Psoas muscle (tissue), 8 donors: ENCODE measurements at regions of chr7 and their contacts with region 1.

Region 1: GRCh38 chr7:139382439-139382838 is 22.7 kb downstream of the LUC7L2 start:
- DNase-seq: no peak
- ATAC-seq: peak in 1 of 4 donors; percentile 26
- H3K4me3 ChIP-seq: no peak overlapping the region
- H3K27ac ChIP-seq: no peak overlapping the region
- H3K4me1 ChIP-seq: no peaks in the 10 kb centered on the region
- H3K27me3 ChIP-seq: no peaks in the 10 kb centered on the region
- CTCF ChIP-seq: no peak

Region 2: GRCh38 chr7:139416405-139416804 is 34.0 kb after region 1 on chr7:
- intact Hi-C with region 1: loop called in 1 of 2 experiments (anchors 5 kb)
- DNase-seq: no peak
- ATAC-seq: no peak
- H3K4me3 ChIP-seq: no peak overlapping the region
- H3K27ac ChIP-seq: no peak overlapping the region
- H3K4me1 ChIP-seq: no peaks in the 10 kb centered on the region
- H3K27me3 ChIP-seq: no peaks in the 10 kb centered on the region
- CTCF ChIP-seq: no peak